ENCODE measurements at regions of chr7 and their contacts with region 1.

Region 1: GRCh38 chr7:87231256-87231655 is 11.7 kb upstream of the TMEM243 start:
- DNase-seq: no peak
- ATAC-seq: no peak
- H3K4me3 ChIP-seq: no peak overlapping the region
- H3K27ac ChIP-seq: no peak overlapping the region
- H3K4me1 ChIP-seq: no peaks in the 10 kb centered on the region
- H3K27me3 ChIP-seq: peaks cover 0 to 20% of the 10 kb centered on the region in 2 experiments; a peak in 1 of 5 replicates
- CTCF ChIP-seq: no peak
- EP300 ChIP-seq: no peak
- POLR2A ChIP-seq: no peak
- RAD21 ChIP-seq: no peak

Region 2: GRCh38 chr7:86914551-86914950 is 316.7 kb before region 1 on chr7:
- CTCF ChIA-PET with region 1: interaction called, 11 read pairs
- POLR2A ChIA-PET with region 1: no interaction called
- in situ Hi-C with region 1: no loop called
- intact Hi-C with region 1: loop called (anchors 5 kb)
- DNase-seq: peak; percentile 10
- ATAC-seq: no peak
- H3K4me3 ChIP-seq: no peak overlapping the region
- H3K27ac ChIP-seq: no peak overlapping the region
- H3K4me1 ChIP-seq: no peaks in the 10 kb centered on the region
- H3K27me3 ChIP-seq: no peaks in the 10 kb centered on the region
- CTCF ChIP-seq: peak; percentile 25; the same call in 1 of the 2 replicates
- EP300 ChIP-seq: no peak
- POLR2A ChIP-seq: no peak
- RAD21 ChIP-seq: no peak

Region 3: DNA sequence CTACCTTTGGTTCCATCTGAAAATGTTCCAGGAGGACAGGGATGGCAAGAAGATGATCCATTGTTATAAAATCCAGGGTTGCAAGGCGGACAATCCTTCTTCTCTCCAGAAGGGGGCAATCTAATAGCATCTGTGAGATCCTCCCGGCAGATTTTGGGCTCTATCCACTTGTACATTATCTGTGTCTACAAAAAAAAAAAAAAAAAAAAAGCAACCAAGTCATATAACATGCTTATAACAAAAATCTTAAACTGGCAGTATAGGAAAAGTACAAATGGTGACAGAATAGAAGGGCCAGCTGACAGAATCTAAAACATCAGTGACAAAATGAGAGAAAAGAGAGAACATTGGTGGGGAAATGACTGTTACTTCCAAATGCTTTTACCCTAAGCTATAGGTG is 304.5 kb before region 1 on chr7:
- CTCF ChIA-PET with region 1: interaction called, 7 read pairs
- POLR2A ChIA-PET with region 1: no interaction called
- in situ Hi-C with region 1: loop called (anchors 5 kb)
- intact Hi-C with region 1: loop called (anchors 1 kb)
- DNase-seq: peak; percentile 28
- ATAC-seq: peak; percentile 46; the same call in 2 of the 3 replicates
- H3K4me3 ChIP-seq: no peak overlapping the region
- H3K27ac ChIP-seq: no peak overlapping the region
- H3K4me1 ChIP-seq: no peaks in the 10 kb centered on the region
- H3K27me3 ChIP-seq: no peaks in the 10 kb centered on the region
- CTCF ChIP-seq: peak; percentile 65
- EP300 ChIP-seq: no peak
- POLR2A ChIP-seq: no peak
- RAD21 ChIP-seq: no peak

Region 4: GRCh38 chr7:86939197-86939814 is 291.9 kb before region 1 on chr7:
- CTCF ChIA-PET with region 1: interaction called, 21 read pairs
- POLR2A ChIA-PET with region 1: no interaction called
- in situ Hi-C with region 1: no loop called
- intact Hi-C with region 1: loop called (anchors 5 kb)
- DNase-seq: peak; percentile 67
- ATAC-seq: peak; percentile 84
- H3K4me3 ChIP-seq: no peak overlapping the region
- H3K27ac ChIP-seq: no peak overlapping the region
- H3K4me1 ChIP-seq: no peaks in the 10 kb centered on the region
- H3K27me3 ChIP-seq: no peaks in the 10 kb centered on the region
- CTCF ChIP-seq: peak; percentile 72
- EP300 ChIP-seq: no peak
- POLR2A ChIP-seq: no peak
- RAD21 ChIP-seq: peak; percentile 46; the same call in 1 of the 2 replicates

Region 5: DNA sequence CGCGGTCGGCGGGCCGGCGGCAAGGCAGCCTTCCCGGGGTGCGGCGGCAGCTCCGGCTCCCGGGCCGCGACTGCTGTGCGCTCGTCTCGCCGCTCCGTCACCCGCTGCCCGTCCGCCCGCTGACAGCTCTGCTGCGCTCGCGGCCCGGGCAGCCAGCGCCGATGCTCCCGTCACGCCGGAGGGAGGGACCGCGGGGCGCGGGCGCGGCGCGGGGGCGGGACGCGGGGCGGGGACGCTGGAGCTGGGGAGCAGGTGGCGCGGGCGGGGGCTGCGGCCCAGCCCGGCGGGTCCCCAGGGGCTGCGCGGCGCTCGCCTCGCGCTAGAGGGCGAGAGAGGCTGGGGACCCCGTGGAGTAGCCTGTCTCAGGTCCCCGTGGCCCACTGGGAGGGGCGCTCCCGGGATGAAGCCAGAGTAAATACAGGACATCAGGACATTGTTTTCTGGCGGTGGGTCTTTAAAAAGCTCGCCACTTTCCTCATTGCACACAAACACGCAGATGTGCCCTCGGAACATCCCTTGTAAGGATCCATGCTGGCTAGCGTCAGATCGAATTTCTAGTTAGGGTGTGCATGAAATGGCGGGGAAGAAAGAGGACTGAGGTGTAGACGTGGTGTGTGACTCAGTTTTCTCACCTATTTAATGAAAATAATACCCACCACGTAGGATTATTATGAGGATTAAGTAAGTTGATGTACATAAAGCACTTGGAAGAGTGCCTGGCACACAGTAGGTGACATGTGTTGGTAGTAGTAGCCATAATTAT is 171.6 kb before region 1 on chr7 and contains the start of gene ELAPOR2:
- CTCF ChIA-PET with region 1: no interaction called
- POLR2A ChIA-PET with region 1: no interaction called
- in situ Hi-C with region 1: no loop called
- intact Hi-C with region 1: loop called (anchors 2 kb)
- DNase-seq: peak; percentile 32
- ATAC-seq: peak; percentile 99
- H3K4me3 ChIP-seq: peak within 1 kb of the TSS; percentile 53 to 76 (median 59); a peak in 5 of 6 replicates
- H3K27ac ChIP-seq: no peak within 1 kb of the TSS
- H3K4me1 ChIP-seq: peaks cover 14% of the 10 kb centered on the region
- H3K27me3 ChIP-seq: peaks cover 2 to 27% of the 10 kb centered on the region in 2 experiments; a peak in 3 of 5 replicates
- CTCF ChIP-seq: peak; percentile 66
- EP300 ChIP-seq: no peak
- POLR2A ChIP-seq: no peak
- RAD21 ChIP-seq: no peak
- total RNA-seq, gene ELAPOR2: 8.4 and 10.3 TPM in 2 replicates

Region 6: GRCh38 chr7:87152107-87152844 is 79.0 kb before region 1 on chr7 and contains the start of gene DMTF1:
- CTCF ChIA-PET with region 1: no interaction called
- POLR2A ChIA-PET with region 1: no interaction called
- in situ Hi-C with region 1: no loop called
- intact Hi-C with region 1: loop called (anchors 1 kb)
- DNase-seq: peak; percentile 93
- ATAC-seq: peak; percentile 92
- H3K4me3 ChIP-seq: peak within 1 kb of the TSS; percentile 86 to 97 (median 91)
- H3K27ac ChIP-seq: peak within 1 kb of the TSS; percentile 98
- H3K4me1 ChIP-seq: peaks cover 46% of the 10 kb centered on the region
- H3K27me3 ChIP-seq: no peaks in the 10 kb centered on the region; a peak in 1 of 5 replicates
- CTCF ChIP-seq: no peak
- EP300 ChIP-seq: 0 out of 4 replicates have a peak, but pooled peaks have one; percentile 7 to 17
- POLR2A ChIP-seq: peak; percentile 82 to 93
- RAD21 ChIP-seq: no peak
- total RNA-seq, gene DMTF1: 17.9 and 45.8 TPM in 2 replicates

Region 7: GRCh38 chr7:87206361-87206760 is 24.9 kb before region 1 on chr7:
- CTCF ChIA-PET with region 1: no interaction called
- POLR2A ChIA-PET with region 1: no interaction called
- in situ Hi-C with region 1: no loop called
- intact Hi-C with region 1: no loop called
- DNase-seq: peak; percentile 2
- ATAC-seq: no peak
- H3K4me3 ChIP-seq: no peak overlapping the region
- H3K27ac ChIP-seq: no peak overlapping the region
- H3K4me1 ChIP-seq: peaks cover 27% of the 10 kb centered on the region
- H3K27me3 ChIP-seq: no peaks in the 10 kb centered on the region
- CTCF ChIP-seq: no peak
- EP300 ChIP-seq: no peak
- POLR2A ChIP-seq: no peak
- RAD21 ChIP-seq: no peak

Region 8: GRCh38 chr7:87416682-87417587 is 185.7 kb after region 1 on chr7:
- CTCF ChIA-PET with region 1: interaction called, 9 read pairs
- POLR2A ChIA-PET with region 1: no interaction called
- in situ Hi-C with region 1: no loop called
- intact Hi-C with region 1: loop called (anchors 2 kb)
- DNase-seq: peak; percentile 59
- ATAC-seq: peak; percentile 77
- H3K4me3 ChIP-seq: no peak overlapping the region
- H3K27ac ChIP-seq: no peak overlapping the region
- H3K4me1 ChIP-seq: peaks cover 11% of the 10 kb centered on the region
- H3K27me3 ChIP-seq: no peaks in the 10 kb centered on the region
- CTCF ChIP-seq: peak; percentile 85
- EP300 ChIP-seq: no peak
- POLR2A ChIP-seq: no peak
- RAD21 ChIP-seq: peak; percentile 73

Measured in HepG2 (cell line).